Activated CD4-positive, alpha-beta memory T cell treated with anti-CD3 and anti-CD28 coated beads for 36 hours (primary cell): ENCODE measurements at regions of chr15 and their contacts with region 1.

Region 1: GRCh38 chr15:74937596-74938296 is at the start of gene COX5A:
- DNase-seq: peak; percentile 96
- H3K4me3 Mint-ChIP-seq: peak within 1 kb of the TSS; percentile 86
- H3K27ac Mint-ChIP-seq: peak within 1 kb of the TSS; percentile 87
- H3K4me1 Mint-ChIP-seq: peaks cover 29% of the 10 kb centered on the region
- H3K27me3 Mint-ChIP-seq: no peaks in the 10 kb centered on the region
- total RNA-seq, gene COX5A: 322 TPM

Region 2: DNA sequence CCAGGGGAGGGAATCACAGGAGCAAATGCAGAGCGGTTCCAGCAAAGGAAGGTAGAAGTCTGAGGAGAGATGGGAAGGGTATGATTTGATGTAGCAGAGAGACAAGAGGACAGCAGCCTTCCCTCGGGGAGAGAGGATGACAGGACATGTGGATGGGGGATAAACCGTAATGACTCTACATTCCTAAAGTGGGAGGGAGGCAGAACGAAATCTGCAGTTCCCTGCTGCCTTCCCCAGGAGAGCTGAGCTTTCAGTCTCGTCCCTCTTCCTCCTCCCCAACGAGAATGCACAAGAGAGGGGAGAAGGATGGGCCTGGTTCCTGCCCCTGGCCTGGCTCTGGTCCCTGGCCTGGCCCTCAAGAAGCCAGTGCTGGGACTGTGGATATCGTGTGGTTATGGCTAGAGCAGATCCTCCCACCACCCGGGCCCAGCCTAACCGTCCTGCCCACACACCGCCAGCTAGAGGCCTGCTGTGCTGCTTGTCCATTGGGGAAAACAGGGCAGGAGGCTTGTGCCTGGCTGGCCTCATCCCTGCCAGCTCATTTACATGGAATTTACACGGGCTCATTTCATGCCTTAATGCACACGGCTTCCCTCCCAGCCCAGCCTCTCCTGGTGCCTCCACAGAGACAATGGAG is 530.6 kb before region 1 on chr15:
- CTCF ChIA-PET with region 1: no interaction called
- POLR2A ChIA-PET with region 1: no interaction called
- intact Hi-C with region 1: no loop called
- DNase-seq: no peak
- H3K4me3 Mint-ChIP-seq: no peak overlapping the region
- H3K27ac Mint-ChIP-seq: peak overlapping the region; percentile 47
- H3K4me1 Mint-ChIP-seq: peaks cover 34% of the 10 kb centered on the region
- H3K27me3 Mint-ChIP-seq: no peaks in the 10 kb centered on the region

Region 3: GRCh38 chr15:74540761-74541493 is 396.8 kb before region 1 on chr15 and contains the start of gene ARID3B:
- CTCF ChIA-PET with region 1: no interaction called
- POLR2A ChIA-PET with region 1: no interaction called
- intact Hi-C with region 1: loop called (anchors 5 kb)
- DNase-seq: peak; percentile 99
- H3K4me3 Mint-ChIP-seq: peak within 1 kb of the TSS; percentile 99
- H3K27ac Mint-ChIP-seq: peak within 1 kb of the TSS; percentile 95
- H3K4me1 Mint-ChIP-seq: peaks cover 48% of the 10 kb centered on the region
- H3K27me3 Mint-ChIP-seq: no peaks in the 10 kb centered on the region
- total RNA-seq, gene ARID3B: 27.3 to 28.6 TPM

Region 4: GRCh38 chr15:74842581-74843444 is 94.9 kb before region 1 on chr15 and contains the start of gene ULK3:
- CTCF ChIA-PET with region 1: no interaction called
- POLR2A ChIA-PET with region 1: no interaction called
- intact Hi-C with region 1: loop called (anchors 1 kb)
- DNase-seq: peak; percentile 95
- H3K4me3 Mint-ChIP-seq: peak within 1 kb of the TSS; percentile 92
- H3K27ac Mint-ChIP-seq: peak within 1 kb of the TSS; percentile 93
- H3K4me1 Mint-ChIP-seq: peaks cover 44% of the 10 kb centered on the region
- H3K27me3 Mint-ChIP-seq: no peaks in the 10 kb centered on the region
- total RNA-seq, gene ULK3: 51.4 to 57.6 TPM

Region 5: DNA sequence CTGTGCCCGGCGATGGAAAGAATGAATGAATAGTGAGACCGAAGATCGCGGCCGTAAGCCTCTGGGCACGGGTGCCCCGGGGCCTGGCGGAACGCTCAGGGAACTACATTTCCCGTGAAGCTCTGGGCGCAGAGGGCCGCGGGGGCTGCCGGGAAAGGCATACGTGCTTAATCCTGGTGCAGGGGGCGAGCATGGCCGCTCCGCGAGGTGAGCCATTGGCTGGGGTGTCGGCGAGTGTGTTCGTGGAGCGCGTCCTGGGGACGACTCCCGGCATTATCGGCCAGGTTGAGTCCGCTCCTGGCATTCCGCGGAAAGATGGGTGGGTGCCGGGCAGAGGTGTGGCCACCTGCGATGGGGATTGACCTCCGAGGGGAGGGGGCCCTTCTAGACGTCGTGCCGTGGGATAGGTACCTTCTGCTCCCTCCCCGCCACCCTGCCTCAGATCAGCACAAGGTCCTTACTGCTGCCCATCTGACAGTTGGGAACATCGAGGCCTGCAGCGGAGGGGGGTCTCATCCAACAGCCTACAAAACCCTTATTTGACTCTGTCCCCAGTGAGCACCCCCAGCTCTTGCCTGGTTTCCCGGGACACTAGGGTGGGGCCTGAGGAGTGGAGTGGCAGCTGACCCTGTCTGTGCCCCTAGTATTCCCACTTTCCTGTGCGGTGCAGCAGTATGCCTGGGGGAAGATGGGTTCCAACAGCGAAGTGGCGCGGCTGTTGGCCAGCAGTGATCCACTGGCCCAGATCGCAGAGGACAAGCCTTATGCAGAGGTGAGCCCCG is 47.7 kb before region 1 on chr15 and contains the start of gene MPI:
- CTCF ChIA-PET with region 1: no interaction called
- POLR2A ChIA-PET with region 1: no interaction called
- intact Hi-C with region 1: loop called (anchors 1 kb)
- DNase-seq: peak; percentile 93
- H3K4me3 Mint-ChIP-seq: peak within 1 kb of the TSS; percentile 90
- H3K27ac Mint-ChIP-seq: peak within 1 kb of the TSS; percentile 76
- H3K4me1 Mint-ChIP-seq: peaks cover 44% of the 10 kb centered on the region
- H3K27me3 Mint-ChIP-seq: no peaks in the 10 kb centered on the region
- total RNA-seq, gene MPI: 56.4 to 60.0 TPM

Region 6: DNA sequence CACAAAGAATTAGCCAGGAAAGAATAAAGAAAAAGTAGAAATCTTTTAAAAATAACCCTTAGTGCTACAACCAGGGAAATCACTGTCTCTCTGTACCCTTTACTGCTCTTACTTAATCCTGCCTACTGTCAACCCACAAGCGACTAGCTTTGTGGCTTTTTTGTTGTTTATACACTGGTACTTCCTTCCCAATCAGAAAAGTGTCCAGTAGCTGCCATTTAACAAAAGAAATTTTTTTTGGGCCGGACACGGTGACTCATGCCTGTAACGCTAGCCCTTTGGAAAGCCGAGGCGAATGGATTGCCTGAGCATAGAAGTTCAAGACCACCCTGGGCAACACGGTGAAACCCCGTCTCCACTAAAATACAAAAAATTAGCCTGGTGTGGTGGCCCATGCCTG is 17.3 kb before region 1 on chr15:
- CTCF ChIA-PET with region 1: no interaction called
- POLR2A ChIA-PET with region 1: no interaction called
- intact Hi-C with region 1: no loop called
- DNase-seq: no peak
- H3K4me3 Mint-ChIP-seq: no peak overlapping the region
- H3K27ac Mint-ChIP-seq: no peak overlapping the region
- H3K4me1 Mint-ChIP-seq: peaks cover 2% of the 10 kb centered on the region
- H3K27me3 Mint-ChIP-seq: no peaks in the 10 kb centered on the region

Region 7: GRCh38 chr15:74956648-74957300 is 19.0 kb after region 1 on chr15 and contains the start of gene RPP25:
- CTCF ChIA-PET with region 1: interaction called, 25 read pairs
- POLR2A ChIA-PET with region 1: no interaction called
- intact Hi-C with region 1: loop called (anchors 2 kb)
- DNase-seq: peak; percentile 80
- H3K4me3 Mint-ChIP-seq: peak within 1 kb of the TSS; percentile 63
- H3K27ac Mint-ChIP-seq: no peak within 1 kb of the TSS
- H3K4me1 Mint-ChIP-seq: peaks cover 50% of the 10 kb centered on the region
- H3K27me3 Mint-ChIP-seq: peaks cover 21% of the 10 kb centered on the region
- total RNA-seq, gene RPP25: 3.8 TPM